ENCODE measurements at regions of chr10 and their contacts with region 1.

Region 1: GRCh38 chr10:34723750-34724149 is 91.3 kb downstream of the PARD3 start:
- DNase-seq: peak in 1 of 2 experiments; percentile 51
- H3K4me3 ChIP-seq: no peak overlapping the region
- H3K4me3 Mint-ChIP-seq: no peak overlapping the region
- H3K27ac Mint-ChIP-seq: no peak overlapping the region
- H3K4me1 ChIP-seq: peaks cover 25% of the 10 kb centered on the region
- H3K4me1 Mint-ChIP-seq: peaks cover 26% of the 10 kb centered on the region
- H3K27me3 ChIP-seq: no peaks in the 10 kb centered on the region
- H3K27me3 Mint-ChIP-seq: no peaks in the 10 kb centered on the region
- CTCF ChIP-seq: peak; percentile 31 to 66

Region 2: DNA sequence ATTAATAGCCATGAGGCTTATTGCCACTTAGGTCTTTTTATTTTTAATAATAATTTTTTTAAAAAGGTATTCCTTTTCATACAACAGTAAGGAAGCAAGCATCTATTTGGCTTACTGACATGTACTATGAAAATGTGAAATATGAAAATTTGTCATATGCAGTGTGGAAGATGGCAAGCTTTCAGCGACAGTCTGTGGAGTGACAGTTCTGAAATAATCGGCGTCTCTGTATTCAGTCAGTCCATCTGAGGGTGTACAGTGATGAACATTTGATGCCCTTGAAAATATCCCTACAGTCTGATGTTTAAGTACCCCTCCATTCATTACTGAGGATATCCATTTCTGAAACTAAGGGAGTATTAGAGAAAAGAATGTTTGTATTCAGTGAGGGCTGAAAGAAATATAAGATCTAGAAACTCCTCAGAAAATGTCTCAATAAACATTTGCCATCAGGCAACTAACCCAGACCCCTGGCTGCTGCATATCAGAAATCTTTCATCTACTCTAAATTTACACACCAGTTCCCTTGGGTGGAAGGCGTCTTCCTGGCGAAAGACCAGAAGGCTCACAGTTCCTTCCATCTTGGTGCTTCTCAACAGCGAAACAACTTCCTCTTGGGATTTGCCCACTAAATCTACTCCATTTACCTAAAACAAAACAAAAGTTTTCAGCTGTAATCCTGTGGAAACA is 349.2 kb before region 1 on chr10:
- CTCF ChIA-PET with region 1: no interaction called
- POLR2A ChIA-PET with region 1: no interaction called
- intact Hi-C with region 1: no loop called
- DNase-seq: no peak
- H3K4me3 ChIP-seq: no peak overlapping the region
- H3K4me3 Mint-ChIP-seq: no peak overlapping the region
- H3K27ac Mint-ChIP-seq: no peak overlapping the region
- H3K4me1 ChIP-seq: no peaks in the 10 kb centered on the region
- H3K4me1 Mint-ChIP-seq: no peaks in the 10 kb centered on the region
- H3K27me3 ChIP-seq: no peaks in the 10 kb centered on the region
- H3K27me3 Mint-ChIP-seq: no peaks in the 10 kb centered on the region
- CTCF ChIP-seq: no peak

Region 3: GRCh38 chr10:34656661-34657060 is 67.1 kb before region 1 on chr10:
- CTCF ChIA-PET with region 1: no interaction called
- POLR2A ChIA-PET with region 1: no interaction called
- intact Hi-C with region 1: no loop called
- DNase-seq: no peak
- H3K4me3 ChIP-seq: no peak overlapping the region
- H3K4me3 Mint-ChIP-seq: no peak overlapping the region
- H3K27ac Mint-ChIP-seq: no peak overlapping the region
- H3K4me1 ChIP-seq: peaks cover 5% of the 10 kb centered on the region
- H3K4me1 Mint-ChIP-seq: peaks cover 40% of the 10 kb centered on the region
- H3K27me3 ChIP-seq: no peaks in the 10 kb centered on the region
- H3K27me3 Mint-ChIP-seq: no peaks in the 10 kb centered on the region
- CTCF ChIP-seq: no peak

Region 4: GRCh38 chr10:34789966-34790506 is 66.3 kb after region 1 on chr10:
- CTCF ChIA-PET with region 1: interaction called, 3 read pairs
- POLR2A ChIA-PET with region 1: no interaction called
- intact Hi-C with region 1: loop called (anchors 1 kb)
- DNase-seq: no peak
- H3K4me3 ChIP-seq: no peak overlapping the region
- H3K4me3 Mint-ChIP-seq: no peak overlapping the region
- H3K27ac Mint-ChIP-seq: no peak overlapping the region
- H3K4me1 ChIP-seq: peaks cover 9% of the 10 kb centered on the region
- H3K4me1 Mint-ChIP-seq: peaks cover 36% of the 10 kb centered on the region
- H3K27me3 ChIP-seq: no peaks in the 10 kb centered on the region
- H3K27me3 Mint-ChIP-seq: no peaks in the 10 kb centered on the region
- CTCF ChIP-seq: no peak

Region 5: DNA sequence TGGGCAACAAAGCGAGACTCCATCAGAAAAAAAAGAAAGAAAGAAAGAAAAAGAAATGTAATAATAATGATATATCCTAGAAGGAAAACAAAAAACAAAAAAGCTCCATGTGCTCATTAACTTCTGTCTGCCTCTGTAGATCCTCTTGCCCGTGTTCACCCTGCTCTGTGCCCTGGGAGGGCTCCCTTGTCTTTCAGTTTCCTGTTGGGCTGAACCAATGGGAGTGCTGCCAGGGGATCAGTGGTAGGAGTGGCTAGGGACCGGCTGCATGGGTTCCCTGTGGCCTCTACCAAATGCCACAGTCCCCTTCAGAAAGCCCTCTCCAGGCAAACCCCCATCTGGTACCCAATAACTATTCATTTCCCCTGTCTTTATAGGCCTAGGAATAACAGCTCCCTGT is 143.1 kb after region 1 on chr10:
- CTCF ChIA-PET with region 1: no interaction called
- POLR2A ChIA-PET with region 1: no interaction called
- intact Hi-C with region 1: no loop called
- DNase-seq: no peak
- H3K4me3 ChIP-seq: no peak overlapping the region
- H3K4me3 Mint-ChIP-seq: no peak overlapping the region
- H3K27ac Mint-ChIP-seq: no peak overlapping the region
- H3K4me1 ChIP-seq: no peaks in the 10 kb centered on the region
- H3K4me1 Mint-ChIP-seq: no peaks in the 10 kb centered on the region
- H3K27me3 ChIP-seq: peaks cover 2% of the 10 kb centered on the region; the same call in 1 of the 2 replicates
- H3K27me3 Mint-ChIP-seq: no peaks in the 10 kb centered on the region
- CTCF ChIP-seq: no peak

Region 6: DNA sequence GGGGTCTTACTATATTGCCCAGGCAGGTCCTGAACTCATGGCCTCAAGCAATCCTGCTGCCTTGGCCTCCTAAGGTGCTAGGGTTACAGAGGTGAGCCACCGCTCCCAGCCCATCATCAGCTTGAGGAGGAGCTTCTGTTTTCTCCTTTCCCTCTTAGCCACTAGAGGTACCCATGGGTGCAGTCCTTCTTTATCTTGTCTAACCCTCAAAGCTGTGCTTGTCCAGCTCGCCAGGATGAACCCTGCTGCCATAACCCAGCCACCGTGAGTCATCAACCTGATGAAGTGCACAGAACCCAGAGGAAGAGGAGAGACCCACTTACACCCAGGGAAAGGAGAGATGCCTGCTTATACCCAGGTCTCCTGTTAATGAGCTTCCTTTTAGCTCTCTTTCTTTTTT is 233.0 kb after region 1 on chr10:
- CTCF ChIA-PET with region 1: interaction called, 6 read pairs
- POLR2A ChIA-PET with region 1: no interaction called
- intact Hi-C with region 1: loop called (anchors 1 kb)
- DNase-seq: no peak
- H3K4me3 ChIP-seq: no peak overlapping the region
- H3K4me3 Mint-ChIP-seq: no peak overlapping the region
- H3K27ac Mint-ChIP-seq: no peak overlapping the region
- H3K4me1 ChIP-seq: no peaks in the 10 kb centered on the region
- H3K4me1 Mint-ChIP-seq: peaks cover 7% of the 10 kb centered on the region
- H3K27me3 ChIP-seq: no peaks in the 10 kb centered on the region
- H3K27me3 Mint-ChIP-seq: no peaks in the 10 kb centered on the region
- CTCF ChIP-seq: no peak

Region 7: GRCh38 chr10:34985823-34986222 is 262.1 kb after region 1 on chr10:
- CTCF ChIA-PET with region 1: interaction called, 8 read pairs
- POLR2A ChIA-PET with region 1: no interaction called
- intact Hi-C with region 1: loop called (anchors 5 kb)
- DNase-seq: peak; percentile 50 to 54
- H3K4me3 ChIP-seq: no peak overlapping the region
- H3K4me3 Mint-ChIP-seq: no peak overlapping the region
- H3K27ac Mint-ChIP-seq: no peak overlapping the region
- H3K4me1 ChIP-seq: no peaks in the 10 kb centered on the region
- H3K4me1 Mint-ChIP-seq: peaks cover 8% of the 10 kb centered on the region
- H3K27me3 ChIP-seq: no peaks in the 10 kb centered on the region
- H3K27me3 Mint-ChIP-seq: no peaks in the 10 kb centered on the region
- CTCF ChIP-seq: peak in 1 of 2 experiments; percentile 67

Region 8: DNA sequence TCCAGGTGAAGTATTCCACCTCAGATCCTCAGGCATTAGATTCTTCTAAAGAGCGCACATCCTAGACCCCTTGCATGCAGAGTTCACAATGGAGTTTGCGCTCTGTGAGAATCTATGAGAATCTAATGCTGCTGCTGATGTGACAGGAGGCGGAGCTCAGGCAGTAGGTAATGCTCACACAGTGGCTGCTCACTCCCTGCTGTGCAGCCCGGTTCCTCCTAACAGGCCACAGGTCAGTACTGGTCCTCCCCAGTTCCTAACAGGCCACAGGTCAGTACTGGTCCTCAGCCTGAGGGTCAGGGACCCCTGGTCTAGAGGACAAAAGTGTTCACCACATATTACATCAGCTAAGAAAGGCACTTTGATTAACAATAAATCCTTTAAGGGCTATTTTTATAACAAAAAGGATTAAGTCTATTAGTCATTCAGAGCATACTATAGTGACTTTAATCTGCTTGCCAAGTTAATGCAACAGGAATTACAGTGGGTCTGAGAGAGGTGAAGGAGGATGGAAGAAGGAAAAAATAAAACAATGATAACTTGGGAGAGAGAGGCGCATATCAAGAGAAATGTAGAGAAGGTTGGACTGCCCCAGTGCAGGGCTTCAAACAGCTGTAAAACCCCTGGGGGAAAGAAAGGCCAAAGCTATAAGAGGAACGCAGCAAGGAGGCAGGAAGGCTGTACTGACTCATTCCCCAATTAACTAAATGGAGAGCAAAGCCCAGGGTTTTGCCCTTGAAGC is 317.2 kb after region 1 on chr10:
- CTCF ChIA-PET with region 1: no interaction called
- POLR2A ChIA-PET with region 1: no interaction called
- intact Hi-C with region 1: no loop called
- DNase-seq: no peak
- H3K4me3 ChIP-seq: no peak overlapping the region
- H3K4me3 Mint-ChIP-seq: no peak overlapping the region
- H3K27ac Mint-ChIP-seq: no peak overlapping the region
- H3K4me1 ChIP-seq: no peaks in the 10 kb centered on the region
- H3K4me1 Mint-ChIP-seq: peaks cover 9% of the 10 kb centered on the region
- H3K27me3 ChIP-seq: no peaks in the 10 kb centered on the region
- H3K27me3 Mint-ChIP-seq: no peaks in the 10 kb centered on the region
- CTCF ChIP-seq: no peak